Left colon (tissue), 2 donors: ENCODE measurements at regions of chr15 and their contacts with region 1.

Region 1: GRCh38 chr15:36432161-36432560 is 147.3 kb upstream of the CDIN1 start:
- DNase-seq: no peak
- ATAC-seq: no peak

Region 2: DNA sequence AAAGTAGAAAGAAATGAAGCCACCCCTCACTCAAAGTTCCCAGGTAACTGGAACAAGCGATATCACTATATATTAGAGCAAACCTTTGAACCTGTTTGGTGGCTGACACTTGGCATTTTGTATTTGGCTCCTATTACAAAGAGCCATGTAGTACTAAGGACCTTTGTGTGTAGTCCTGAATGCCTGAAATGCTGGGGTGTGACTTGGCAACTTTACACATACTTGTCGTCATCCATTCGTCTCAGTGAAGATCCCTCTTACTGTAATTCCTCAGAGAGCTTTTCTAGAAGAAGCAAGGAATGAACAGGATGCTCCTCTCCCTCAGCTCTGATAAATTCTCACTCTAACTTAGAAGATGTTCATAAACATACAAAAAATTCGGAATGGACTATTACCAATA is 68.8 kb before region 1 on chr15:
- intact Hi-C with region 1: loop called in 1 of 2 experiments (anchors 10 kb)
- DNase-seq: no peak
- ATAC-seq: no peak